Activated B cell treated with CpG ODN at 0.5 μM for 24 hours (primary cell): ENCODE measurements at regions of chr1 and their contacts with region 1.

Region 1: GRCh38 chr1:94805912-94806311 is 14.2 kb upstream of the SLC44A3 start:
- DNase-seq: peak; percentile 27
- ATAC-seq: peak; percentile 89
- H3K4me3 Mint-ChIP-seq: no peak overlapping the region
- H3K27ac Mint-ChIP-seq: no peak overlapping the region
- H3K4me1 Mint-ChIP-seq: peaks cover 7% of the 10 kb centered on the region
- H3K27me3 Mint-ChIP-seq: peaks cover 6% of the 10 kb centered on the region
- CTCF ChIP-seq: peak; percentile 87

Region 2: GRCh38 chr1:93304716-93305138 is 1501.2 kb before region 1 on chr1:
- CTCF ChIA-PET with region 1: interaction called, 3 read pairs
- POLR2A ChIA-PET with region 1: no interaction called
- intact Hi-C with region 1: loop called (anchors 10 kb)
- DNase-seq: no peak
- ATAC-seq: peak; percentile 71
- H3K4me3 Mint-ChIP-seq: no peak overlapping the region
- H3K27ac Mint-ChIP-seq: no peak overlapping the region
- H3K4me1 Mint-ChIP-seq: no peaks in the 10 kb centered on the region
- H3K27me3 Mint-ChIP-seq: no peaks in the 10 kb centered on the region
- CTCF ChIP-seq: peak; percentile 87

Region 3: DNA sequence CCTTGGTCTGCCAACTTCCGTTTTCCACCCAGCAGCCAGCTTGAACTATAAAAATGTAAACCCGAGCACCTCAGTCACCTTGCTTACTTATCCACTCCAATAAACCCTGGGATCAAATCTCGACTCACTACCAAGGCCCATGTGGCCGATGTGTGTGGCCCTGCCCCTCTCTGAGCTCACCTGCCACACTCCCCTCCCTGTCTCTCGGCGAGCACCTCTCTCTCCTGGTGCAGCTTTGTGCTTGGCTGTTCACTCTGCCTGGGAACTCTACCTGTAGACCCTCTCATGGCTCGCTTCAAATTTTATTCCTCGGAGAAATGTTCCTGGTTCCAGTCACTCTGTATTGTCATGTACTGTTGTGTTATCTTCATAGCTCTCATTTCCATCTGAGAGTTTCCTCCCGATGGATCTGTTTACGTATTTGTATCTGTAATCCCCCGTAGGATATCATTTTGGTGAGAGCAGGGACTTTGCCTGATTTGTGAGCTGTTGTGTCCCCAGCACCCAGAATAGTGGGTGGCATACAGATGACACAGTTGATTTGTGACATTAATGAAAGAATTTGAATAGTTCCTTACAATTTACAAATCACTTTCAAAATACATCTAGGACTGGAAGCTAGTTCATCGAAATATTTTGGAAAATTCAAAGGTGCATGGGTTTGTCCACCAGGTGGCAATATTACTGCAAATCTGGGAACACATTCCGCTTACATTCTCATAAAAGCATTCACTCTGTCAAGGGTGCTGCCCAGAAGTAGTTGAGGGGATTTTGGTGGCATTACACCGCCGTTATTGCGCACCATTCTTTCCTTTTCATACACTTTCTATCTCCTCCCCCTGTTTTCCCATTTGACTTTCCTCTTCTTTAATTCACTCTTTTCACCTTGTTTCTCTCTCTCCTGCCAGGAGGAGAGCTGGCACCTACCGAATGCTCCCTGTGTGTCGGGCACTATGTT is 780.2 kb before region 1 on chr1:
- CTCF ChIA-PET with region 1: interaction called, 7 read pairs
- POLR2A ChIA-PET with region 1: no interaction called
- intact Hi-C with region 1: loop called (anchors 1 kb)
- DNase-seq: no peak
- ATAC-seq: no peak
- H3K4me3 Mint-ChIP-seq: no peak overlapping the region
- H3K27ac Mint-ChIP-seq: no peak overlapping the region
- H3K4me1 Mint-ChIP-seq: no peaks in the 10 kb centered on the region
- H3K27me3 Mint-ChIP-seq: peaks cover 6% of the 10 kb centered on the region
- CTCF ChIP-seq: no peak

Region 4: GRCh38 chr1:94061513-94062443 is 744.1 kb before region 1 on chr1:
- CTCF ChIA-PET with region 1: interaction called, 6 read pairs
- POLR2A ChIA-PET with region 1: no interaction called
- intact Hi-C with region 1: loop called (anchors 1 kb)
- DNase-seq: no peak
- ATAC-seq: peak; percentile 47
- H3K4me3 Mint-ChIP-seq: no peak overlapping the region
- H3K27ac Mint-ChIP-seq: no peak overlapping the region
- H3K4me1 Mint-ChIP-seq: no peaks in the 10 kb centered on the region
- H3K27me3 Mint-ChIP-seq: peaks cover 9% of the 10 kb centered on the region
- CTCF ChIP-seq: no peak

Region 5: DNA sequence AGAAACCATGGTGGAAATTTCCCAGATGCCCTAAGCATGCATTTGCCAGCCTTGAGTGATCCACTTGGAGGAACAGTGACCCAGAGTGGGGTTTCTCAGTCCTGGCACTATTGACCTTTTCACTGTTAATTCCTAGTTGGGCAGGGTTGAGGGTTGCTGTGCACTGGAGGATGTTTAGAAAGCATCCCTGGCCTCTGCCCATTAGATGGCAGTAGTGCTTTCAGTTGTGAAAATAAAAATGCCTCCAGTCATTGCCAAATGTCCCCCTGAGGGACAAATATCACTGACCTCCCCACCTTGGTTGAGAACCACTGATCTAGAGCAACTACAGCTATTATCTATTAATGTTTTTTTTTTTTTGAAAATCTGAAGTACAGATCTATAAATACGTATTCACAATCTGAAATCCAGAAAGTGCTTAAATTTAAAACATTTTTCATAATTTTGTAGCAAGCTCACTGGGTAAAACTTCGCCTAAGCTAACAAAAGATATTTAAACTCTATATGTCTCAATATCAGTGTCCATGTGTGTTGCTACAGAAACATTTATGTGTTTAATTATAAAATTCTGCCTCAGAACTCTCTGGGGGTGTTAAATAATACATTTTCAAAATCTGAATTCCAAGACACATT is 291.7 kb before region 1 on chr1:
- CTCF ChIA-PET with region 1: interaction called, 39 read pairs
- POLR2A ChIA-PET with region 1: no interaction called
- intact Hi-C with region 1: loop called (anchors 1 kb)
- DNase-seq: no peak
- ATAC-seq: no peak
- H3K4me3 Mint-ChIP-seq: no peak overlapping the region
- H3K27ac Mint-ChIP-seq: no peak overlapping the region
- H3K4me1 Mint-ChIP-seq: no peaks in the 10 kb centered on the region
- H3K27me3 Mint-ChIP-seq: no peaks in the 10 kb centered on the region
- CTCF ChIP-seq: no peak

Region 6: GRCh38 chr1:94679336-94680038 is 126.4 kb before region 1 on chr1:
- CTCF ChIA-PET with region 1: no interaction called
- POLR2A ChIA-PET with region 1: no interaction called
- intact Hi-C with region 1: no loop called
- DNase-seq: no peak
- ATAC-seq: no peak
- H3K4me3 Mint-ChIP-seq: no peak overlapping the region
- H3K27ac Mint-ChIP-seq: no peak overlapping the region
- H3K4me1 Mint-ChIP-seq: no peaks in the 10 kb centered on the region
- H3K27me3 Mint-ChIP-seq: peaks cover 4% of the 10 kb centered on the region
- CTCF ChIP-seq: no peak

Region 7: DNA sequence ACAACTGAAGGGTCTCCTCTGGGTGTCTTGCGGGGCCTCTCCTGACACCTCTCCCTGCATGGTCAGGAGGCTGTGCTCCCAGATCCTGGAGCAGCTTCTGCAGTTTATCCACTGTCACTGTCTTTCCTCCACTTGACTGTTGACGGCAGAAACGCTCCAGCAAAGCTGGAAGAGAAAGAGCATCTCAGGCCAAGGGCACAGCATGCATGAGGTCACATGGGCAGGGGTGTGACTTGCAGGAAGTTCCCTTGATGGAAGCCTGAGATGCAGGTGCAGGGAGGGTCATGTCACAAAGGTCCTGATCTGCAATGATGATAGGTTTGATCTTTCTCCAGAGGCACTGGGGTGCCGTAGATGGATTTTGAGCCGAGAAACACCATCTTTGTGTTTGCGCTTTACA is 37.5 kb after region 1 on chr1:
- CTCF ChIA-PET with region 1: no interaction called
- POLR2A ChIA-PET with region 1: no interaction called
- intact Hi-C with region 1: no loop called
- DNase-seq: no peak
- ATAC-seq: no peak
- H3K4me3 Mint-ChIP-seq: no peak overlapping the region
- H3K27ac Mint-ChIP-seq: no peak overlapping the region
- H3K4me1 Mint-ChIP-seq: no peaks in the 10 kb centered on the region
- H3K27me3 Mint-ChIP-seq: peaks cover 17% of the 10 kb centered on the region
- CTCF ChIP-seq: no peak

Region 8: DNA sequence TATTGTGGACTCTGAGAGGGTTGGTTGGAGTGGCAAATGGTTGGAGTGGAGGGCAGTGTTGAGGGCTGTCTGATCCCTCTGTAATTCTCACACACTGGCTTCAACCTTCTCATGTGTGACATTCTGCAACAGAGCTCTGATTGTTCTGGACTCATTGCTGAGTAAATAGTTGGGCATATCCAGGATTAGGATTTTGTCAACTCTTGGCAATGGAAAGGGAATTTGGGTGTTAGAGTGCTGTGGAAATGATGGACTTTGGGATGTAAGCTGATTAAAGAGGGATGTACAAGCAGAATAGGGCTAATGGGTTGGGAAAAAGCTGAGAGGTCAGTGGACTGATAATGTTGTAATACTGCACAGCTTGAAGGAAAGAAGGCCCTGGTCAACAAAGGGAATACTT is 327.8 kb after region 1 on chr1:
- CTCF ChIA-PET with region 1: no interaction called
- POLR2A ChIA-PET with region 1: no interaction called
- intact Hi-C with region 1: no loop called
- DNase-seq: no peak
- ATAC-seq: no peak
- H3K4me3 Mint-ChIP-seq: no peak overlapping the region
- H3K27ac Mint-ChIP-seq: no peak overlapping the region
- H3K4me1 Mint-ChIP-seq: no peaks in the 10 kb centered on the region
- H3K27me3 Mint-ChIP-seq: peaks cover 6% of the 10 kb centered on the region
- CTCF ChIP-seq: no peak